Activated CD4-positive, alpha-beta T cell treated with anti-CD3 and anti-CD28 coated beads for 36 hours (primary cell): ENCODE measurements at regions of chr19 and their contacts with region 1.

Region 1: DNA sequence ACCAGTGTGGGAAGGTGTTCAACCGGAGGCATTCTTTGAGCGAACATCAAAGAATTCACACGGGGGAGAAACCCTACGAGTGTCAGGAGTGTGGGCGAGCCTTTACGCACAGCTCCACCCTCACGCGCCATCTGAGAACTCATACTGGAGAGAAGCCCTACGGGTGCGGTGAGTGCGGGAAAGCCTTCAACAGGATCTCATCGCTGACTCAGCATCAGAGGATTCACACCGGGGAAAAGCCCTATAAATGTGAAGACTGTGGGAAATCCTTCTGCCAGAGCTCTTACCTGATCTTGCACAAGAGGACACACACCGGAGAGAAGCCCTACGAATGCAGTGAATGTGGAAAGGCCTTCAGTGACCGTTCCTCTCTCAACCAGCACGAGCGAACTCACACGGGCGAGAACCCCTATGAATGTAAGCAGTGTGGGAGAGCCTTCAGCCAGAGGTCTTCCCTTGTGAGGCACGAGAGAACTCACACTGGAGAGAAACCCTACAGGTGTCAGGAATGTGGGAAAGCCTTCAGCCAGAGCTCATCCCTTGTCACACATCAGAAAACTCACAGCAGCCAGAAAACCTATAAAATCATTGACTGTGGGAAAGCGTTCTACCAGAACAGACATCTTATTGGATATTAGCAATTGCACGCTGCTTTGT is 6.9 kb upstream of the ZNF555 start:
- DNase-seq: no peak
- ATAC-seq: no peak
- H3K4me3 Mint-ChIP-seq: no peak overlapping the region
- H3K27ac Mint-ChIP-seq: no peak overlapping the region
- H3K4me1 Mint-ChIP-seq: no peaks in the 10 kb centered on the region
- H3K27me3 Mint-ChIP-seq: no peaks in the 10 kb centered on the region

Region 2: GRCh38 chr19:2933490-2933910 is 99.2 kb after region 1 on chr19:
- CTCF ChIA-PET with region 1: no interaction called
- POLR2A ChIA-PET with region 1: no interaction called
- intact Hi-C with region 1: loop called in 1 of 2 experiments (anchors 1 kb)
- DNase-seq: no peak
- ATAC-seq: no peak
- H3K4me3 Mint-ChIP-seq: no peak overlapping the region
- H3K27ac Mint-ChIP-seq: no peak overlapping the region
- H3K4me1 Mint-ChIP-seq: no peaks in the 10 kb centered on the region
- H3K27me3 Mint-ChIP-seq: no peaks in the 10 kb centered on the region